PC-9 (cell line): ENCODE measurements at regions of chr4 and their contacts with region 1.

Region 1: GRCh38 chr4:114598191-114599121 is at the start of gene UGT8:
- DNase-seq: peak in 1 of 2 experiments; percentile 53
- H3K4me3 ChIP-seq: peak within 1 kb of the TSS; percentile 55
- H3K27ac ChIP-seq: no peak within 1 kb of the TSS
- H3K4me1 ChIP-seq: no peaks in the 10 kb centered on the region
- H3K27me3 ChIP-seq: peaks cover 4% of the 10 kb centered on the region; the same call in 1 of the 2 replicates
- CTCF ChIP-seq: no peak
- total RNA-seq, gene UGT8: 2.7 and 3.7 TPM in 2 replicates

Region 2: GRCh38 chr4:114659386-114660008 is 61.0 kb after region 1 on chr4:
- CTCF ChIA-PET with region 1: no interaction called
- POLR2A ChIA-PET with region 1: no interaction called
- intact Hi-C with region 1: loop called (anchors 5 kb)
- DNase-seq: peak; percentile 33 to 48
- H3K4me3 ChIP-seq: no peak overlapping the region
- H3K27ac ChIP-seq: no peak overlapping the region
- H3K4me1 ChIP-seq: no peaks in the 10 kb centered on the region
- H3K27me3 ChIP-seq: no peaks in the 10 kb centered on the region
- CTCF ChIP-seq: peak; percentile 70

Region 3: DNA sequence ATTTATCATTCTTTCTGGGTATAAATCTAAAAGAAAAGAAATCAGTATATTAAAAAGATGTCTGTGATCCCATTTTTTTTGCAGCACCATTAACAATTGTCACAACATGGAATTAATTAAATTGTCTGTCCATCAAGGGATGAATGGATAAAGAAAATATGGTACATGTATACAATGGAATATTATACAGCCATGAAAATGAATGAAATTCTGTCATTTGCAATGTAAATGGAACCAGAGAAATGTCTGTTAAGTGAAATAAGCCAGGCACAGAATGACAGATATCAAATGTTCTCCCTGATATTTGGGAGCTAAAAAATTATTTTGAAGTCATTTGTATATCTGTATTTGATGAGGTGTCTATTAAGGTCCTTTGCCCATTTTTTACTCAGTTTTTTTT is 592.1 kb after region 1 on chr4:
- CTCF ChIA-PET with region 1: no interaction called
- POLR2A ChIA-PET with region 1: no interaction called
- intact Hi-C with region 1: no loop called
- DNase-seq: no peak
- H3K4me3 ChIP-seq: no peak overlapping the region
- H3K27ac ChIP-seq: no peak overlapping the region
- H3K4me1 ChIP-seq: no peaks in the 10 kb centered on the region
- H3K27me3 ChIP-seq: no peaks in the 10 kb centered on the region
- CTCF ChIP-seq: no peak